Prostate gland (tissue), 2 donors: ENCODE measurements at regions of chr20 and their contacts with region 1.

Region 1: DNA sequence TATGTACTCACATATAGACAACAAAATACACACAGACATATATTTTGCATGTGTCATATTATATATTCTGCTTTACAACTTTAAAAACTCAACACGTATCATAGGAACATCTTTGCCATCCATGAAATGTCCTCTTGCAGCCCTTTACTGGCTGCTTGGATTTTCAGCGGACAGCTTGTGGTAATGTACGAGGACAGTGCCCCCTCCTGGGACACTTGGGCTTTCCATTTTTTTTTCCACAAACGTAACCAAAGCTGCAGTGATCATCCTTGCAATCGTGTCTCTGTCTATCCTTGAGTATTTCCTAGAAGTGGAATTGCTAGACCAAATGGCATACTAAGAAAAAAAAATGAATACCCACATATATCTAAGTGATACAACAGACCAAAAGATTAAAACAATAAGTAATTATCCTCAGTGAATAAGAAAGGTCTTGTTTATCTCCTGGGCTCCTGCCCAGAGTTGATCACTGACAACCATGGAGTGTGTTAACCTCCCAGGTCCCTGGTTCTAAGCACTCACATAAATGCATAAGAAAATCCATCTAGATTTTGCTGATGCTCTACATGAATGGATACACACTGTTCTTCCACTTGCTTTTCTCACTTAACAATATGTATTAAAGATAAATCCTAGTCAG is 18.1 kb downstream of the BPI start:
- DNase-seq: peak; percentile 34
- H3K4me3 ChIP-seq: no peak overlapping the region
- H3K27ac ChIP-seq: no peak overlapping the region
- H3K4me1 ChIP-seq: no peaks in the 10 kb centered on the region
- H3K27me3 ChIP-seq: no peaks in the 10 kb centered on the region
- CTCF ChIP-seq: peak in 3 of 4 experiments; percentile 55 to 71 (median 62)
- POLR2A ChIP-seq: no peak

Region 2: GRCh38 chr20:38057351-38057972 is 264.6 kb before region 1 on chr20:
- intact Hi-C with region 1: loop called (anchors 10 kb)
- DNase-seq: peak; percentile 82
- H3K4me3 ChIP-seq: no peak overlapping the region
- H3K27ac ChIP-seq: no peak overlapping the region
- H3K4me1 ChIP-seq: no peaks in the 10 kb centered on the region
- H3K27me3 ChIP-seq: no peaks in the 10 kb centered on the region
- CTCF ChIP-seq: peak; percentile 84 to 92 (median 86)
- POLR2A ChIP-seq: no peak

Region 3: DNA sequence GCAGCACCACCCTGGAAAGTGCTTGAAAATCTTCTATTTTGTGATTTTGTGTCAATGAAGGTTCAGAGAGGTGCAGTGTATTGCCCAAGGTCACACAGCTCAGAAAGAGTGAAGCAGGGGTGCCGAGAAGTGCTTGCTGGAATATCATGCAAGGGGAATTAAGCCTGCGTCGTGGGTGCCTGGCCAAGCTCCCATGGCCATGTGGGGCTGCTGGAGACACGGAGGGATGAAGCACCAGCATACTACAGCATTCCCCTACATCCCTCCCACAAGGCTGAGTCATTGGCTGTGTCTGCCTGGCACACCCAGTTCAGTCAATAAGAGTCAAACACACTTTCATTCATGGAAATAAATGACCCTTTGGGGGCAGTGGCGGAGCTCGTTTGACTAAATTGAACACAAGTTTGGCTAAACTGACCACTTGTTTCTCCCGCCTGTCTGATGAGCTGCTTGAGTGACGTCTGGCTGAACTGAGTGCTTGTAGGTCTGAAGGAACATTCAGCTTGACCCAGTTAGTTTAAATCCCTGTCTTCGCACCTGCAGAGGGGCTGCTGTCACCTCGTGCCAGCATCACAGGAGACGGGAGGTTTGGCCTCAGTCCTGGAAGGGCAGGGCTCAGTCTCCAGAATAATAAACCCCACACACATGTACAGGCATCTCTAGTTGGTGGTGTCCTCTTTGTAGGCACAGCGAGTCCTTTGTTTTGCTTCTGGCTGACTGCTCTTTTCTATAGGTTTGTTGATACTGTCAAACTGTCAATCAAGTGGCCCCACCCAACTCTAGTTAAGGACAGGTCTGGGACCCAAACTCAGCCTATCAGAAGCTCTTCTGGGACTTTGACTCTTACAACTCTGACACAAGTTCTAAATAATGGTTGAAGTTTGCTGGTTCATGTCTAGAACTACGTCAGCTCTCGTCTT is 148.6 kb before region 1 on chr20:
- intact Hi-C with region 1: loop called (anchors 10 kb)
- DNase-seq: no peak
- H3K4me3 ChIP-seq: no peak overlapping the region
- H3K27ac ChIP-seq: no peak overlapping the region
- H3K4me1 ChIP-seq: no peaks in the 10 kb centered on the region
- H3K27me3 ChIP-seq: no peaks in the 10 kb centered on the region
- CTCF ChIP-seq: no peak
- POLR2A ChIP-seq: no peak

Region 4: DNA sequence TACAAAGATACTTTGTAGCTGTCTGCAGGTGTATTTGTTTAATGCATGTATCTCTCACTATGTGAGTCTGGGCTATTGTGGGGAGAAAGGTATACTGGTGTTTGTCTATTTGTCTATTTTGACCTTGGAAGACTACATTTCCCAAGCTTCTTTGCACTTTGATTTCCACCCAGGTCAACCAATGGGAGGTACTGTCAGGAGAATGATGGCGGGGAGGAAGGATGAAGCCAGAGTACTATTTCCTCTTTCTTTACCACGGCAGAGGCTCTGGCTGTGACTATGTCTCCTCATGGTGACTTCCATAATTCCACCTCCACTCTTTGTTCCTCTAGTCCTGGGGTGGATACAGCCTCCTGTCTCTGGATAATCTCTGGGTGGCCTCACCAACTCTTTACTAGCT is 47.3 kb after region 1 on chr20:
- intact Hi-C with region 1: no loop called
- DNase-seq: no peak
- H3K4me3 ChIP-seq: no peak overlapping the region
- H3K27ac ChIP-seq: no peak overlapping the region
- H3K4me1 ChIP-seq: no peaks in the 10 kb centered on the region
- H3K27me3 ChIP-seq: no peaks in the 10 kb centered on the region
- CTCF ChIP-seq: no peak
- POLR2A ChIP-seq: no peak